Activated naive CD4-positive, alpha-beta T cell treated with anti-CD3 and anti-CD28 coated beads for 36 hours (primary cell): ENCODE measurements at regions of chr5 and their contacts with region 1.

Region 1: DNA sequence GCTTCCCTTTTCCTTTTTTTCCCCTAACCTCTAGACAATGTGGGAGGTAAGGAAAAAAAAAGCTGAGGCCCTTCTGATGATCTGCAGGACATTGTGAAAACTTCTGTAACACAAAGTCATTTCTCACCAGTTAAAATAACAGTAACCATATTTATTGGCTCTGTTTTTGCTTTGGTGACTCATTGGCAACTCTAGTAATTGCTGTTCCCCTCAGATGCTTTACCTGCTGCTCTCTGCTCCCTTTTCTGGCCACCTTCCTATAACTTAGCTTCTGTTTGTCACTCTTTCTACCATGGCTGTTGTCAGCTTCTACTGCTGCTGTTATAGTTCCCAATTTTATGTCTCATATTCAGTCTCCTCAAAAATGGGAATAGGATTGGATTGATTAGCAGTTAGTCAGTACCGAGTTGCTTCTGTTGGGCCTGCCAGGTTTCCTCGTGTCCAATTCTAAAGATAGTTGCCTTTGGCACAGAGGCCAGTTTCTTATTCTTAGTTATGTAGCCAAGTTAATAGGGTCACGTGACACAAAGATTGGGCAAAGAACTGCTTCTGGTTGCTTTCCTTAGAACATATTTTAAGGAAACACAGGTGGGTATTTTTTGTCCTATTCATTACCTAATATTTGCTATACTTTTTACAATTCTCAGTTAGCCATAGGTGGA is 16.8 kb downstream of the SCAMP1 start:
- DNase-seq: no peak
- H3K4me3 Mint-ChIP-seq: no peak overlapping the region
- H3K27ac Mint-ChIP-seq: no peak overlapping the region
- H3K4me1 Mint-ChIP-seq: peaks cover 32% of the 10 kb centered on the region
- H3K27me3 Mint-ChIP-seq: no peaks in the 10 kb centered on the region

Region 2: DNA sequence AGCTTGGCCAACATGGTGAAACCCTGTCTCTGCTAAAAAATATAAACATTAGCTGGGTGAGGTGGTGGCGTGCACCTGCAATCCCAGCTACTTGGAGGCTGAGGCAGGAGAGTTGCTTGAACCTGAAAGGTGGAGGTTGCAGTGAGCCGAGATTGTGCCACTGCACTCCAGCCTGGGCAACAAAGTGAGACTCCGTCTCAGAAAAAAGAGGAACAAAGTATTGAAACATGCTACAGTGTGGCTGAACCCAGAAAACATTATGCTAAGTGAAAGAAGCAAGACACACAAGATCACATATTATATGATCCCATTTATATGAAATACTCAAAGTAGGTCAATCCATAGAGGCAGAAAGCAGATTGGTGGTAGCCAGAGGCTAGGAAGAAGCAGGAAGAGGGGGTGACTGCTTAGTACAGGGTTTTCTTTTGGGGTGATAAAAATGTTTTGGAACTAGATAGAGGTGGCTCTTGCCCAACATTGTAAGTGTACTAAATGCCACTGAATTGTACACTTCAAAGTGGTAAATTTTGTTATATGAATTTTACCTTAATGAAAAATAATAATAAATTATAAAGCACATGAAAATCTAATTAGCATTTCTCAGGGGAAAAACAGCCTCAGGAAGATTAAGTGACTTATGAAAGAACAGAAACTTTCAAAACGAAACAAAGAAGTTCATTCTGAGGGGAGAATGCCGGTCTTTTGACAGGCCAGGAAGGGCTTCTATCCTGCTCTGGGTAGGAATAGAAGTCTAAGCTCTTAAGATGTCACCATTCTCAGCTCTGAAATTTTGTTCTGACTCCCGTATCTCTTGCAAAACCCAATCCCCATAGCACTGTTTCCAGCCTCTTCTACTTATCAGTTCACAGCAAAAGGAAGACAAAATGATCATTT is 439.9 kb before region 1 on chr5:
- CTCF ChIA-PET with region 1: no interaction called
- intact Hi-C with region 1: no loop called
- DNase-seq: no peak
- H3K4me3 Mint-ChIP-seq: no peak overlapping the region
- H3K27ac Mint-ChIP-seq: no peak overlapping the region
- H3K4me1 Mint-ChIP-seq: peaks cover 21% of the 10 kb centered on the region
- H3K27me3 Mint-ChIP-seq: peaks cover 9% of the 10 kb centered on the region

Region 3: GRCh38 chr5:78405829-78406750 is 28.9 kb after region 1 on chr5:
- CTCF ChIA-PET with region 1: no interaction called
- intact Hi-C with region 1: loop called (anchors 2 kb)
- DNase-seq: no peak
- H3K4me3 Mint-ChIP-seq: no peak overlapping the region
- H3K27ac Mint-ChIP-seq: peak overlapping the region; percentile 72
- H3K4me1 Mint-ChIP-seq: peaks cover 50% of the 10 kb centered on the region
- H3K27me3 Mint-ChIP-seq: no peaks in the 10 kb centered on the region

Region 4: GRCh38 chr5:78537821-78538220 is 160.6 kb after region 1 on chr5:
- CTCF ChIA-PET with region 1: no interaction called
- intact Hi-C with region 1: no loop called
- DNase-seq: no peak
- H3K4me3 Mint-ChIP-seq: no peak overlapping the region
- H3K27ac Mint-ChIP-seq: no peak overlapping the region
- H3K4me1 Mint-ChIP-seq: no peaks in the 10 kb centered on the region
- H3K27me3 Mint-ChIP-seq: no peaks in the 10 kb centered on the region